Spleen (tissue), 13 donors: ENCODE measurements at regions of chr9 and their contacts with region 1.

Region 1: GRCh38 chr9:123191260-123192079 is 76.9 kb downstream of the STRBP start:
- DNase-seq: no peak
- H3K4me3 ChIP-seq: no peak overlapping the region
- H3K27ac ChIP-seq: no peak overlapping the region
- H3K4me1 ChIP-seq: peaks cover 0 to 31% (median 5%) of the 10 kb centered on the region in 6 donors
- H3K27me3 ChIP-seq: no peaks in the 10 kb centered on the region
- CTCF ChIP-seq: no peak
- POLR2A ChIP-seq: no peak

Region 2: GRCh38 chr9:122991370-122991830 is 200.1 kb before region 1 on chr9:
- intact Hi-C with region 1: no loop called
- DNase-seq: no peak
- H3K4me3 ChIP-seq: no peak overlapping the region
- H3K27ac ChIP-seq: no peak overlapping the region
- H3K4me1 ChIP-seq: peaks cover 0 to 14% (median 0%) of the 10 kb centered on the region in 6 donors
- H3K27me3 ChIP-seq: no peaks in the 10 kb centered on the region
- CTCF ChIP-seq: peak; percentile 39 to 76 (median 67)
- POLR2A ChIP-seq: no peak

Region 3: GRCh38 chr9:123131258-123131657 is 60.2 kb before region 1 on chr9:
- intact Hi-C with region 1: loop called (anchors 10 kb)
- DNase-seq: no peak
- H3K4me3 ChIP-seq: no peak overlapping the region
- H3K27ac ChIP-seq: no peak overlapping the region
- H3K4me1 ChIP-seq: peaks cover 0 to 5% (median 0%) of the 10 kb centered on the region in 6 donors
- H3K27me3 ChIP-seq: no peaks in the 10 kb centered on the region
- CTCF ChIP-seq: no peak
- POLR2A ChIP-seq: no peak